ENCODE measurements at regions of chr11 and their contacts with region 1.

Region 1: GRCh38 chr11:74739546-74740270 is 8.5 kb upstream of the CHRDL2 start:
- DNase-seq: peak; percentile 62
- ATAC-seq: peak; percentile 98
- H3K4me3 Mint-ChIP-seq: no peak overlapping the region
- H3K27ac Mint-ChIP-seq: no peak overlapping the region
- H3K4me1 Mint-ChIP-seq: 0 out of 2 replicates have a peak, but pooled peaks cover 2% of the 10 kb centered on the region
- H3K27me3 Mint-ChIP-seq: peaks cover 13% of the 10 kb centered on the region
- CTCF ChIP-seq: peak; percentile 91

Region 2: DNA sequence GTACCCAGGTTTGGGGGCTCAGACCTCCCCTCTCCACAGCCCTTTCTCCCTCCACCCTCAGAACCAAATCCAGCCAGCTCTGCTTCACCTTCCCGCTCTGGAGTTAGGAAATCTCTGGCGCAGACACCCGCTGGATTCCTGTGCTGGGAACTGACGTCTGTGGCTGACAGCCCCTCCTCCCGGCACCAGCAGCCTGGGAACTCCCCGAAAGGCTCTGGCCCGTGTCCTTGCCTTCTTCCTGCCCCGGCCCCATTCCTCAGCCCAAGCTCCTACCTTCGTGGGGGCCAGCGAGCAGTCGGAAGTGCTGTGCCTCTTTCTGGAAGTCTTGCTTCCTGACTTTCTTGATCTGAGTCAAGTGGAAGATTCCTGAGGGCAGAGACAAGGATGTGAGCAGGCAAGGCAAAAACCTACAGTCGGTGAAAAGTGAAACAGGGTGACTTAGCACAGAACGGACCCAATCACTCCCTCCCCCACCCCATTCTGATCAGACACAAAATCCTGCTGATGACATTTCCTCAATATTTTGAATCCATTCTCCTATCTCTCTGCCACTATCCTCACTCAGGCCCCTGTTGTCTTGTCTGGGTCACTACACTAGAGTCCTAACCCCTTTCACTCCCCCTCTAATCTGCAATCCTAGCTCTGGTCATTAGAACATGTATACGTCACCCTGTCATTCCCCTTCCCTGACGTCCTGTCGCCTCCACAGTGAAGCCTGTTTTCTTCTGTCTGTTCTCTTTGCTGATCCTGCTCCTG is 42.6 kb before region 1 on chr11:
- CTCF ChIA-PET with region 1: interaction called, 96 read pairs
- POLR2A ChIA-PET with region 1: no interaction called
- DNase-seq: peak; percentile 45
- ATAC-seq: peak; percentile 61
- H3K4me3 Mint-ChIP-seq: peak overlapping the region; percentile 59
- H3K27ac Mint-ChIP-seq: no peak overlapping the region
- H3K4me1 Mint-ChIP-seq: peaks cover 17% of the 10 kb centered on the region
- H3K27me3 Mint-ChIP-seq: no peaks in the 10 kb centered on the region; the same call in 1 of the 2 replicates
- CTCF ChIP-seq: no peak

Region 3: GRCh38 chr11:74720596-74721478 is 18.9 kb before region 1 on chr11:
- CTCF ChIA-PET with region 1: interaction called, 29 read pairs
- POLR2A ChIA-PET with region 1: no interaction called
- DNase-seq: no peak
- ATAC-seq: peak; percentile 70
- H3K4me3 Mint-ChIP-seq: no peak overlapping the region
- H3K27ac Mint-ChIP-seq: no peak overlapping the region
- H3K4me1 Mint-ChIP-seq: peaks cover 11% of the 10 kb centered on the region
- H3K27me3 Mint-ChIP-seq: peaks cover 34% of the 10 kb centered on the region
- CTCF ChIP-seq: no peak

Region 4: DNA sequence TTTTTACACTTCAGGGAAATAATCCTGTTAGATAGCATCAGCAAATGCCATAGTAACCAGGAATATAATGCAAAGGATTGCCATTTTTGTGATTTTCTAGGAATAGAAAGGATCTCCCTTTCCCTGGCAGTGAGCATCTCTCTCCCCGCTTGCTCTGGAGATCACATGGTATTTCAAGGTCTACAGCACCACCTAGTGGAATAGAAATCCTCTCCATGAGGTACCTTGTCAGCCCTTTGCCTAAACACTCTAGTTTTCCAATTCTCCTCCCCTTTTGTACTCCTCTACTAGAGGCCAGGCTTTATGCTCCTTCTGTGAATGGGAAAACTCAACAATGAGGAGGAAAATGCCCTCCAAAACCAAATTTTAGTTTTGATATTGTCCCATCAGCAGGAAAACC is 130.8 kb after region 1 on chr11:
- CTCF ChIA-PET with region 1: no interaction called
- POLR2A ChIA-PET with region 1: no interaction called
- DNase-seq: no peak
- ATAC-seq: peak; percentile 89
- H3K4me3 Mint-ChIP-seq: no peak overlapping the region
- H3K27ac Mint-ChIP-seq: no peak overlapping the region
- H3K4me1 Mint-ChIP-seq: no peaks in the 10 kb centered on the region
- H3K27me3 Mint-ChIP-seq: no peaks in the 10 kb centered on the region; the same call in 1 of the 2 replicates
- CTCF ChIP-seq: no peak; the same call in 1 of the 2 replicates